IMR-90 (cell line): ENCODE measurements at regions of chr5 and their contacts with region 1.

Region 1: GRCh38 chr5:174793684-174794328 is 69.4 kb downstream of the MSX2 start:
- DNase-seq: peak; percentile 43
- ATAC-seq: peak; percentile 98
- H3K4me3 ChIP-seq: no peak overlapping the region
- H3K27ac ChIP-seq: no peak overlapping the region
- H3K4me1 ChIP-seq: peaks cover 3% of the 10 kb centered on the region; the same call in 1 of the 2 replicates
- H3K27me3 ChIP-seq: peaks cover 6% of the 10 kb centered on the region
- CTCF ChIP-seq: peak; percentile 89
- POLR2A ChIP-seq: no peak
- RAD21 ChIP-seq: peak; percentile 94

Region 2: DNA sequence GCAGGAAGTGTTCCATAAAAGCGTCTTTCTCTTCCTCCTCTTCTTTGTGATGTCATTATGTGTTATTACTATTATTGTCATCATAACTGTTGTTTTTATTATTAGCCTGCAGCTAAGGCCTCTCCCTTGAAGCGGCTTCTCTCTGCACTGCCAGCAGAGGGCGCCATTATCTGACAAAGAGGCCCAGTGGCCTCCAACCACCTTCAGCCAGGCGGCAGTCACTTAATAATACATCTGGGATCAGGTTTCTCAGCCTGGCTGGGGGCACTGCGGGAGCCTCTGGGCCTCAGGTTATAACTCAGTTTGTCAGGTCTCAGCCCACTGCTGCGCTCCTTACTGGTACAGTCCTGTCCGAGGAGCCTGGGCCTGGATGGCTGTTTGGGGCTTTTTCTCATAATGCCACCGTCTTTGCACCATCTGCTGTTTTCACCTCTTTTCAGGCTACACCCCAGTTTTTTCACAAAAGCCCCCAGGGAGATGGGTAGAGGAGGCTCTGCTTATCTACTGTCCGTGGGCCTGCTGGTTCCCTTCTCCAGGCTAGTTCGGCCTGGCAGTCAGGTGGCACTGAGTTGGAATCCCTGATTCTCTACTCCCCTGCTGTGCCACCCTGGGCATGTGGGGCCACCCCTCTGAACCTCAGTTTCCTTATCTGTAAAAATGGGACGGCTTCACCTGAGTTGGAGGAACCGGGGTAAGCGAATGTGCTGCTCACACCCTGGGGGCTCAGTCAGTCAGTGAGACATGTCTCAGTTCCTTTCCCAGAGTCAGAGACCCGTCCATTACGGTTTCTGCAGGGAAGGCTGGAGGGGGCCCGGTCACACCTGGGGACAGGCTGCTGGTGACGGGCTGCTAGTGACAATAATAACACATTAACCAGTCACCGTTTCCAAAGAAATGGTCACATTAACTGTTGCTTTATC is 466.2 kb before region 1 on chr5:
- CTCF ChIA-PET with region 1: interaction called, 3 read pairs
- POLR2A ChIA-PET with region 1: no interaction called
- dilution Hi-C with region 1: no loop called
- in situ Hi-C with region 1: no loop called
- intact Hi-C with region 1: loop called (anchors 1 kb)
- DNase-seq: peak; percentile 69
- ATAC-seq: peak; percentile 85
- H3K4me3 ChIP-seq: no peak overlapping the region
- H3K27ac ChIP-seq: peak overlapping the region; percentile 10; the same call in 1 of the 2 replicates
- H3K4me1 ChIP-seq: peaks cover 4% of the 10 kb centered on the region; the same call in 1 of the 2 replicates
- H3K27me3 ChIP-seq: no peaks in the 10 kb centered on the region; the same call in 1 of the 2 replicates
- CTCF ChIP-seq: peak; percentile 82
- POLR2A ChIP-seq: no peak
- RAD21 ChIP-seq: peak; percentile 73

Region 3: DNA sequence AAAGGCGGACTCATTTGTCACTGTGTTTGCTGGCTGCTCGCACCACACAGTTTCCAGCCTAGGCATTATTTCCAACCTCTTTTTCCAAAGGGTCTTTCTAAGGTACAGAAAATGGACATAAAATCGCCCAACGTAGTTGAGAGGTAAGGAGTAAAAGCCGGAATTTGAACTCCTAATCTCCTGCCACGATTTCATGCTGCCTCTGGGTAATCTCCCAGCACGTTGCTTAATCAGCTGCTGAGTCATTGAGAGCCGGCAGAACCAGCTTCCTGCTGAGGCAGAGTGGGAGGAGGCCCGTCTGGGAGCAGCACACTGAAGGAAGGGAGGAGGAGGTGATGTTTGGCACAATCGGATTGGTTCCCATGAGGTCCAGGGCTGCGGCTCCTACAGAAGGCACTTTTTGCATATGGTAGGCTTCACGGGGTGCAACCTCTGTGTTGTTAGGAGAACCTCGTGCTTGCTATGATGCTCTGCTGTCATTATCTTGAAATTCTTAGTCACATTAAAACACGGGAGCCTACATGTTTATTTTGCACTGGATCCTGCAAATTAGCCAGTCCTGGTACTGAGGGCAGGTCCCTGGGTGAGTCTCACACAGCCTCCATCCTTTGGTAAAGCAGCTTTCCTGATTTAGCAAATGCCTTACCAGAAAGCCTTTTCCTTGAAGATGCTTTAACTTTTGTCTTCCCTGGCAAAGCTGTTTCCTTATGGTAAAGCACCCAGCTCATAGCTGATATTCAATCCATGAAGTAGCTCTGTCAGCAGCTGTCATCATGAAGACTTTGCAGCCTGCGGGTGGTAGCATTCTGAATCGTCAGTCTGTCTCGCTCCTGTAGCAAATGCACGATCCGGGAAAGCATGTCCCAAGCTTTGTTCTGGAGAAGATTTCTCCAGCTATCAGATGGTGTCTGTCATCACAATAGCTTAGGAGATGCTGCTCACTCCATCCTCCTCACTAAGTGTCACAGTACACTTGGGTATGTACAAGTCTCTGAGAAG is 261.1 kb before region 1 on chr5:
- CTCF ChIA-PET with region 1: no interaction called
- POLR2A ChIA-PET with region 1: no interaction called
- dilution Hi-C with region 1: no loop called
- in situ Hi-C with region 1: no loop called
- intact Hi-C with region 1: loop called (anchors 5 kb)
- DNase-seq: peak; percentile 98
- ATAC-seq: peak; percentile 86
- H3K4me3 ChIP-seq: 0 out of 2 replicates have a peak overlapping the region, but pooled peaks have one; percentile 0
- H3K27ac ChIP-seq: peak overlapping the region; percentile 93
- H3K4me1 ChIP-seq: peaks cover 32% of the 10 kb centered on the region
- H3K27me3 ChIP-seq: no peaks in the 10 kb centered on the region
- CTCF ChIP-seq: no peak
- POLR2A ChIP-seq: no peak
- RAD21 ChIP-seq: no peak

Region 4: GRCh38 chr5:174724491-174725260 is 69.1 kb before region 1 on chr5 and contains the start of gene MSX2:
- CTCF ChIA-PET with region 1: no interaction called
- POLR2A ChIA-PET with region 1: no interaction called
- dilution Hi-C with region 1: no loop called
- in situ Hi-C with region 1: no loop called
- intact Hi-C with region 1: loop called (anchors 2 kb)
- DNase-seq: peak; percentile 86
- ATAC-seq: peak; percentile 96
- H3K4me3 ChIP-seq: peak within 1 kb of the TSS; percentile 54
- H3K27ac ChIP-seq: peak within 1 kb of the TSS; percentile 38
- H3K4me1 ChIP-seq: no peaks in the 10 kb centered on the region
- H3K27me3 ChIP-seq: peaks cover 40% of the 10 kb centered on the region
- CTCF ChIP-seq: no peak
- POLR2A ChIP-seq: peak; percentile 59
- RAD21 ChIP-seq: no peak
- total RNA-seq, gene MSX2: 1.9 and 2.2 TPM in 2 replicates

Region 5: GRCh38 chr5:174935854-174936474 is 142.2 kb after region 1 on chr5:
- CTCF ChIA-PET with region 1: no interaction called
- POLR2A ChIA-PET with region 1: no interaction called
- dilution Hi-C with region 1: no loop called
- in situ Hi-C with region 1: no loop called
- intact Hi-C with region 1: loop called (anchors 10 kb)
- DNase-seq: peak; percentile 30
- ATAC-seq: peak; percentile 84
- H3K4me3 ChIP-seq: no peak overlapping the region
- H3K27ac ChIP-seq: no peak overlapping the region
- H3K4me1 ChIP-seq: no peaks in the 10 kb centered on the region
- H3K27me3 ChIP-seq: no peaks in the 10 kb centered on the region
- CTCF ChIP-seq: peak; percentile 82
- POLR2A ChIP-seq: no peak
- RAD21 ChIP-seq: peak; percentile 80